ENCODE measurements at regions of chr10 and their contacts with region 1.

Region 1: DNA sequence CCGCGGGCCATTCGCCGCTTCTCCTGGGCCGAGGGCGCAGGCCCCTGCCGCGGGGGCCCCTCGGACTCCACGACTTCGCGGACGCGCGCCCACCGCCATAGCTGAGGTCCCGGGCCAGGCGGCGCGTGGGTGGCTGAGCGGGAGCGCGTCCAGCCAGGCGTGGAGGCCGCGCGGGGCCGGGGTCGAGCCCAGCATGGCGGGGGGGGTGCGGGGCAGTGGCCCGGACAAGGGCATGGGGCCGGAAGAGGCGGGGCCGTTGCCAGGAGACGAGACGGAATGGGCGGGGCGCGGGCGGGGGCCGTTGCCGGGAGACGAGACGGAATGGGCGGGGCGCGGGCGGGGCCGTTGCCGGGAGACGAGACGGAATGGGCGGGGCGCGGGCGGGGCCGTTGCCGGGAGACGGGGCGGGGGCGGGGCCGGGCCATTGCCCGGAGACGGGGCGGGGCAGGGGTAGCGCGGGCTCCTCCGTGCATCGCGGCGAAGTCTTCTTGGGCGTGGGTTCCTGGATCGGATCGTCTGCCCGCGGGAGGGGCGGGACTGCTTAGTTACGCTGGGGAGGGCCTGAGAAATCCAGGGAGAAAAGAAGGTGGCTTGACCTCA is 14.8 kb downstream of the ADAM8 start:
- DNase-seq: peak; percentile 87
- H3K4me3 Mint-ChIP-seq: peak overlapping the region; percentile 82
- H3K27ac Mint-ChIP-seq: no peak overlapping the region
- H3K4me1 Mint-ChIP-seq: peaks cover 75% of the 10 kb centered on the region
- H3K27me3 Mint-ChIP-seq: no peaks in the 10 kb centered on the region

Region 2: GRCh38 chr10:132762267-132762666 is 499.6 kb before region 1 on chr10:
- CTCF ChIA-PET with region 1: no interaction called
- intact Hi-C with region 1: no loop called
- DNase-seq: peak; percentile 50
- H3K4me3 Mint-ChIP-seq: no peak overlapping the region
- H3K27ac Mint-ChIP-seq: no peak overlapping the region
- H3K4me1 Mint-ChIP-seq: peaks cover 19% of the 10 kb centered on the region
- H3K27me3 Mint-ChIP-seq: no peaks in the 10 kb centered on the region

Region 3: DNA sequence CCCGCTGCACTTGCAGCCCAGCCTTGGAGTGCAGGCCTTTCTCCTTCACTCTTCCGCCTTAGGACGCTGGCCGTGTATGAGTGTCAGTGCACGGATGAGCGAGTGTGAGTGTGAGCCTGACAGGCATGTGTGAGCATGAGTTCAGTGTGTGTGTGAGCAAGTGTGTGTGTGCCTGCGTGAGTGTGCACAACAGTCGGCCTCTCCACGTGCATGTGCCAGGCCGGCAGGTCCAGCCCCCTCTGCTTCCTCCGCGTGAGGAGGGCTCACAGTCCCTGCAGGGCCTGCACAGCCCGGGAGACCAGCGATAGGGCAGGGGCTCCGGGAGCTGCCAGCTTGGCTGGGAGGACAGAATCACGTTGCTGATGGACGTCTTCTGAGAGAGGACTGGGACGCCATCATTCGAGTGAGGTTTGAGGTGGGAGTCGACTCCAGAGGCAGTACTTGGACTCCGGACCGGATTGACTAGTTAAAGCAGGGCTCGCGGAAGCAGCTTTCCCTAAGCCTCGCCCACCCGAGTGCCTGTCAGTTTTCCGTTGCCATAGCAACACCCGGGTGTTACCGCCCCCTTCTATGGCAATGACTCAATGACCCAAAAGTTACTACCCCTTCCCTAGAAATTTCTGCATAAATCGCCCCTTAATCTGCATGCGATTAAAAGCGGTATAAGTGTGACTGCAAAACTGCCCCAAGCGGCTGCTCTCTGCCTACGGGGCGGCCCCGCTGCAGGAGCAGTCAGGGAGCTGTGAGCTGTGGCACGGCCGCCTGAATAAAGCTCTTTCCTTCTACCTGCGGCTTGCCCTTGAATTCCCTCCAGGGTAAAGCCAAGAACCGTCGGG is 299.8 kb before region 1 on chr10:
- CTCF ChIA-PET with region 1: no interaction called
- intact Hi-C with region 1: loop called (anchors 1 kb)
- DNase-seq: peak; percentile 93
- H3K4me3 Mint-ChIP-seq: peak overlapping the region; percentile 67
- H3K27ac Mint-ChIP-seq: peak overlapping the region; percentile 84
- H3K4me1 Mint-ChIP-seq: peaks cover 23% of the 10 kb centered on the region
- H3K27me3 Mint-ChIP-seq: peaks cover 14% of the 10 kb centered on the region

Region 4: DNA sequence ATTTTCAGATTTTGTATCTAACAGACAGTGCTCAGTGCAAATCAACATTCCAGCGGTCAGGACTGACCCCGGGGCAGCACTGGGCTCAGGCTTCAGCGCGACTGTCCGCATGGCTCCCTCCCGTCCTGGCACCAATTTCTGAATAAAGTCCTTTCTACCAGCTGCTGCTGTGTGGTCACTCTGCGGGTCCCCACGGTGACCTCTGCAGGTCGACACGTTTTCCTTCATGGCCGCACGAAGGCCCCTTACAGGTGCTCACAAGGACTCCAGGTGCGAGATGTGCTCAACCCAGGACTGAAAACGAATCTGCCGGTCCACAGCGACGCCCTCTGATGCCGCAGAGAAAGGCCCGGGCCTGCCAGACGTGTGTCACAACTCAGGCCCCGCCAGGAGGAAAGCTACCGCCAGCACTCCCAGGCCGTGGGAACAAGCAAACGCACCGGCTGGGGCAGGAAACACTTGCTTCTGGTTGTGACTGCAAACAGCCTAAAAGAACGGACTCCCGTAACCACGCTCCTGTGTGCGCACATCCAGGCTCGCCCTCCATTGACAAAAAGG is 35.5 kb before region 1 on chr10:
- CTCF ChIA-PET with region 1: no interaction called
- intact Hi-C with region 1: loop called (anchors 2 kb)
- DNase-seq: peak; percentile 50
- H3K4me3 Mint-ChIP-seq: no peak overlapping the region
- H3K27ac Mint-ChIP-seq: no peak overlapping the region
- H3K4me1 Mint-ChIP-seq: peaks cover 17% of the 10 kb centered on the region
- H3K27me3 Mint-ChIP-seq: peaks cover 34% of the 10 kb centered on the region

Region 5: DNA sequence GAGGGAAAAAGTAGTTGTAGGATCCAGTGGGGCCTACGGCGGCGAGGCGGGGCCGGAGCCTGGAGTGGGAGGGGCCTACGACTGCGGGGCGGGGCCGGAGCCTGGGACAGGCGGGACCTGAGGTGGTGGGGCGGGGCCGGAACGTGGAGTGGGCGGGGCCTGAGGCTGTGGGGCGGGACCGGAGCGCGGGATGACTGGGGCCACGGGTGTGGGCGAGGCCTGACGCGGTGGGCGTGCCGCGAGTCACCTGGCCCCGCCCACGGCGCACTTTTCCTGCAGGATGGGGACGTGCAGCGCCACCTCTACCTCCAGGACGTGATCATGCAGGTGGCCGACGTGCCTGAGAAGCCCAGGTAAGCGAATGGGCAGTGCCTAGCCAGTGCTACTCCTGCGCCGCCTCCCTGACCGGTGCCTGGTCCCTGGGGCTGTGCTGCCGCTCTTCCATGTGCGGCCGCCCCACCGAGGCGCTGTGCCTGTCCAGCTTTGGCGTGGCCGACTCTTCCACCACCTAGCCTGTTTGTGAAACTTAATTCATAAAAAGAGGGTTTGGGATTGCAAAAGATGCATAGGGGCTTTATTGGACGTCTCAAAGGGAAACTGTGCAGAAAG is 47.4 kb after region 1 on chr10:
- CTCF ChIA-PET with region 1: interaction called, 8 read pairs
- intact Hi-C with region 1: loop called (anchors 1 kb)
- DNase-seq: peak; percentile 95
- H3K4me3 Mint-ChIP-seq: peak overlapping the region; percentile 65
- H3K27ac Mint-ChIP-seq: peak overlapping the region; percentile 71
- H3K4me1 Mint-ChIP-seq: peaks cover 23% of the 10 kb centered on the region
- H3K27me3 Mint-ChIP-seq: no peaks in the 10 kb centered on the region

Region 6: GRCh38 chr10:133378251-133379096 is 116.6 kb after region 1 on chr10:
- CTCF ChIA-PET with region 1: no interaction called
- intact Hi-C with region 1: loop called (anchors 5 kb)
- DNase-seq: peak; percentile 61
- H3K4me3 Mint-ChIP-seq: peak overlapping the region; percentile 74
- H3K27ac Mint-ChIP-seq: peak overlapping the region; percentile 30
- H3K4me1 Mint-ChIP-seq: peaks cover 5% of the 10 kb centered on the region
- H3K27me3 Mint-ChIP-seq: no peaks in the 10 kb centered on the region